ENCODE measurements at regions of chr3 and their contacts with region 1.

Region 1: GRCh38 chr3:49434731-49435130 is 5.6 kb upstream of the NICN1 start:
- DNase-seq: no peak
- H3K4me3 ChIP-seq: no peak overlapping the region
- H3K27ac ChIP-seq: no peak overlapping the region
- H3K4me1 ChIP-seq: no peaks in the 10 kb centered on the region
- H3K27me3 ChIP-seq: no peaks in the 10 kb centered on the region
- CTCF ChIP-seq: no peak
- EP300 ChIP-seq: no peak
- POLR2A ChIP-seq: no peak

Region 2: DNA sequence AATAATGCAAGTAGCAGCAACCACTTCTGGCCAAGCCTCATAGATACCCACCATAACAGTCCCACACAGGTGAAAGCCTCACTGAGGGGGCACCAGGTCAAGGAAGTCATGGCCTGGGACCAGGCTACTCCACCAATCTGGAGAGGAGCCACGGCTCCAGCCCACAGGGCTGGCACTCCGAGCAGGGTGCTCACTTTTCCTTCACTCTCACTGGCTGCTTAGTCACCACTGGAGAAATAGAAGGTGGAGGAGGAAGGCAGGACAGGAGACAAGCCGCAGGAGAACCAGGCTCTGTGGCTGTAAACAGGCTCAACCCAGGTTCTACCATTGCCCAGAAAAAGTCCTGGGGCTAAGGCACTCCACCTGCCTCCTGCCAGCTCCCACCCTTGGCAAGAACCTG is 315.3 kb before region 1 on chr3:
- intact Hi-C with region 1: loop called in 1 of 4 experiments (anchors 10 kb)
- DNase-seq: no peak
- H3K4me3 ChIP-seq: no peak overlapping the region
- H3K27ac ChIP-seq: peak overlapping the region in 1 of 2 donors; percentile 83
- H3K4me1 ChIP-seq: peaks cover 7% of the 10 kb centered on the region
- H3K27me3 ChIP-seq: no peaks in the 10 kb centered on the region
- CTCF ChIP-seq: no peak
- EP300 ChIP-seq: no peak
- POLR2A ChIP-seq: no peak

Region 3: DNA sequence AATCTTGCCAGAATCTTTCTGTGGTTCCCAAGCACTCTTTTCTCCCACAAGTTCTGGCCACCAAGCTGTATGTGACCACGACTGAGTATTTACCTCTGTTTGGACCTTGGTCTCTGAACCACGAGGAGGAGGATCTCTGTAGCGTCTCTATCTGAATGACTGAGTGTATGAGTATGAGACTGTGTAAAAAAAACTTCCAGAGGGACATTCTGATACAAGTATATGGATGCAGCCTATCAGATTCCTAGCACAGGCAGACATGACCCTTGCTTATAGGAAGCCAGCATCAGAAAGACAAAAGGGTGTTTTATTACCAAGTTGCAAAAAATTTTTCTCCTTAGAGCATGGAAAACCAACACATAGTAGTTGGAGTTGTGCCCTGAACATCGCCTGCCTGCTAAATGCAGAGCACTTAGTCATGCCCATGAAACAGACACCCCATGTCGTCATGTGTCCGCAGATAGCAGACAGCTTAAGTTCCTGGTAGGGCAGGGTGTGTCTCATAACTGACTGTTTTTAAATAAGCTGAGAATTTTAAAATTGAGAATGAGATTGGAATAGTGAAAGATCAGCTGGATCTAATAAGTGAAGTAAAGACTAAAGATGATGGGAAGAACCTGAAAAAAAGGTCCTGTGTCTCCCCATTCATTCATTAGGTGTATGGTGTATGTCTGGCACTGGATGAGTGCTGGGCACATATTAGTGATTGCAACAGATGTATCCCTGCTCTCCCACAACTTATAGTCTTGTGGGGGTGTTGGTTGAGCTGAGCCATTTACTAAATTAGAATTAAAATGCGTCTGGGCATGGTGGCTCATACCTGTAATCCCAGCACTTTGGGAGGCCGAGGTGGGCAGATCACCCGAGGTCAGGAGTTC is 66.2 kb after region 1 on chr3:
- intact Hi-C with region 1: no loop called
- DNase-seq: peak in 4 of 5 donors; percentile 41 to 64 (median 52)
- H3K4me3 ChIP-seq: no peak overlapping the region
- H3K27ac ChIP-seq: no peak overlapping the region
- H3K4me1 ChIP-seq: peaks cover 6% of the 10 kb centered on the region
- H3K27me3 ChIP-seq: no peaks in the 10 kb centered on the region
- CTCF ChIP-seq: no peak
- EP300 ChIP-seq: no peak
- POLR2A ChIP-seq: no peak

Measured in ovary (tissue), 10 donors.